Vagina (tissue), 2 donors: ENCODE measurements at regions of chr7 and their contacts with region 1.

Region 1: GRCh38 chr7:92447345-92448204 is at the start of gene GATAD1:
- DNase-seq: peak in 1 of 2 donors; percentile 95
- H3K4me3 ChIP-seq: peak within 1 kb of the TSS; percentile 91 to 98
- H3K27ac ChIP-seq: peak within 1 kb of the TSS; percentile 96
- H3K4me1 ChIP-seq: peaks cover 9% of the 10 kb centered on the region
- H3K27me3 ChIP-seq: no peaks in the 10 kb centered on the region
- CTCF ChIP-seq: peak; percentile 91 to 98 (median 95)
- POLR2A ChIP-seq: peak in 1 of 2 donors; percentile 49
- total RNA-seq, gene GATAD1: 30.4 TPM

Region 2: GRCh38 chr7:91656541-91657482 is 790.8 kb before region 1 on chr7:
- intact Hi-C with region 1: no loop called
- DNase-seq: no peak
- H3K4me3 ChIP-seq: no peak overlapping the region
- H3K27ac ChIP-seq: peak overlapping the region; percentile 7
- H3K4me1 ChIP-seq: peaks cover 7% of the 10 kb centered on the region
- H3K27me3 ChIP-seq: no peaks in the 10 kb centered on the region
- CTCF ChIP-seq: no peak
- POLR2A ChIP-seq: no peak

Region 3: GRCh38 chr7:92134271-92135051 is 313.1 kb before region 1 on chr7 and contains the start of gene CYP51A1:
- intact Hi-C with region 1: loop called (anchors 5 kb)
- DNase-seq: peak in 1 of 2 donors; percentile 96
- H3K4me3 ChIP-seq: peak within 1 kb of the TSS; percentile 88 to 98
- H3K27ac ChIP-seq: peak within 1 kb of the TSS; percentile 98
- H3K4me1 ChIP-seq: peaks cover 27% of the 10 kb centered on the region
- H3K27me3 ChIP-seq: no peaks in the 10 kb centered on the region
- CTCF ChIP-seq: no peak
- POLR2A ChIP-seq: peak; percentile 32 to 93
- total RNA-seq, gene CYP51A1: 39.0 TPM